B cell (primary cell): ENCODE measurements at regions of chr7 and their contacts with region 1.

Region 1: GRCh38 chr7:44999245-45000095 is 531 bp upstream of the CCM2 start:
- DNase-seq: peak; percentile 100
- ATAC-seq: peak; percentile 84
- H3K4me3 ChIP-seq: peak overlapping the region; percentile 40 to 99 (median 76)
- H3K4me3 Mint-ChIP-seq: peak overlapping the region; percentile 99
- H3K27ac ChIP-seq: peak overlapping the region; percentile 65 to 72
- H3K27ac Mint-ChIP-seq: peak overlapping the region; percentile 98
- H3K4me1 ChIP-seq: peaks cover 36 to 50% of the 10 kb centered on the region in 2 donors
- H3K4me1 Mint-ChIP-seq: peaks cover 57% of the 10 kb centered on the region
- H3K27me3 ChIP-seq: no peaks in the 10 kb centered on the region
- H3K27me3 Mint-ChIP-seq: no peaks in the 10 kb centered on the region
- CTCF ChIP-seq: no peak

Region 2: DNA sequence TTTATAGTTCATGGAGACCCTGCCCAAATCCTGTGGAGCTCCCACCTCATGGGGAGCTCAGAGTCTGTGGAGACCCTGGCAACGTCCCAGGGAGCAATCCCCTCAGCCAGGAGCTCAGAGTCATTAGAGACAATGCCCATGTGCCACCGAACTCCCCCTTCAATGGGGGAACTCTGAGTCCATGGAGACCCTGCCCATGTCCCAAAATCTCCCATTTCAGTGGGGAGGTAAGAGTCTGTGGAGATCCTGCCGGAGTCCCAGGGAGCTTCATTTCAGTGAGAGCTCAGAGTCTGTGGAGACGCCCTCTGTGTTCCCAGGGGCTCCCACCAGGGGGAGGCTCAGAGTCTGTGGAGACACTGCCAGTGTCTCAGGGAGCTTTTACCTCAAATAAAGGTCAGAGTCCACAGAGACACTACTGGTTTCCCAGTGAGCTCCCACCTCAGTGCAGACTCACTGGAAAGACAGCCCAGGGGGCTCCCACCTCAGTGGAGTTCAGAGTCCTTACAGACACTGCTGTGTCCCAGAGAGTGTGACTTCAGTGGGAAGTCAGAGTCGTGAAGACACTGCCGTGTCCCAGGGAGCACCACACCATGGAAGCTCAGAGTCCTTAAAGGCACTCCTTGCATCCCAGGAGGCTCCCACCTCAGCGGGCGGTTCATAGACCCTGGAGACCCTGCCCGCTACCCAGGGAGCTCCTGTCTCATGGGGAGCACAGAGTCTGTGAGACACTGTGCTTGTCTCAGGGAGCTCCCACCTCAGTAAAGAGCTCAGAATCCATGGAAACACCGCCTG is 25.7 kb before region 1 on chr7:
- CTCF ChIA-PET with region 1: interaction called, 49 read pairs
- POLR2A ChIA-PET with region 1: interaction called, 20 read pairs
- intact Hi-C with region 1: loop called (anchors 1 kb)
- DNase-seq: no peak
- ATAC-seq: no peak
- H3K4me3 ChIP-seq: no peak overlapping the region
- H3K4me3 Mint-ChIP-seq: no peak overlapping the region
- H3K27ac ChIP-seq: no peak overlapping the region
- H3K27ac Mint-ChIP-seq: peak overlapping the region; percentile 15
- H3K4me1 ChIP-seq: peaks cover 14 to 41% of the 10 kb centered on the region in 2 donors
- H3K4me1 Mint-ChIP-seq: peaks cover 38% of the 10 kb centered on the region
- H3K27me3 ChIP-seq: no peaks in the 10 kb centered on the region
- H3K27me3 Mint-ChIP-seq: no peaks in the 10 kb centered on the region
- CTCF ChIP-seq: peak; percentile 41

Region 3: DNA sequence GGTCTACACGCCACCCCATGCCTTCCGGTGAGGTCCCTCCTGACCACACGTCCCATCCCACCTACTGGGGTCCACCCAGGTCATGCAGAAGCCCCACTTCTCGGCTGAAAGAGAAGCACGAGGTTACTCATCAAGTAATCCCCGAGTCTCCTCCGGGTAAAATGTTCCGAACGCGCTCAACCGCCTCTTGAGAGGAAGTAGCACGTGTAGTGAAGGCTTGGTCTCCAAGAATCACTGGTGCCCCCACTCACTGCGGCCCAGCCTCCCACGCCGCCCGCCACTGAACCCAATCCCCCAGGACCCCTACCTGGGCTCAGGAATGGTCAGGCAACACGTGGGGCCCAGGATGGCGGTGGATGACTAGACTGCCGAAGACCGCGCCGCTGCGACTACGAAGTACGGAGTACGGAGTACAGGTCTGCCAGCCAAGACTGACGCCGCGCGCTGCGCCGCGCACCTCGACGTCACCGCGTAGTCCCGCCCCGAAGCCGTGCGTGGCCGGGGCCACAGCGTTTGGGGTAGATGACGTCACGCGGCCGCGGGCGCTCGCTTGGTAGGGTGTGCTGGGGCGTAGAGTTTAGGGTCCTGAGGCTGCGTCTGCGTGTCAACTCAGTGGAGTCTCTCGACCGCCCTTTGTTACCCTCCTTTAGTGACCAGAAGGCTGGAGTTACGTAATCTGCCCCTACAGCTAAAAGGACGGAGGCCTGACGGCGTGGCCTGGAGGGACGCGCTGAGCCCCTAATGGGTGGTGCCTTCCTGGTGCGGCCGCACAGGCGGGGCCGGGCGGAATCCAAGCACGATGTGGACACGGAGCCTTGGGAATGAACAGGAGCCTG is 13.0 kb before region 1 on chr7:
- CTCF ChIA-PET with region 1: interaction called, 4 read pairs
- POLR2A ChIA-PET with region 1: interaction called, 12 read pairs
- intact Hi-C with region 1: loop called (anchors 1 kb)
- DNase-seq: peak; percentile 98
- ATAC-seq: peak; percentile 94
- H3K4me3 ChIP-seq: peak overlapping the region; percentile 62 to 92 (median 73)
- H3K4me3 Mint-ChIP-seq: peak overlapping the region; percentile 98
- H3K27ac ChIP-seq: peak overlapping the region; percentile 97 to 98
- H3K27ac Mint-ChIP-seq: peak overlapping the region; percentile 98
- H3K4me1 ChIP-seq: peaks cover 29 to 39% of the 10 kb centered on the region in 2 donors
- H3K4me1 Mint-ChIP-seq: peaks cover 51% of the 10 kb centered on the region
- H3K27me3 ChIP-seq: no peaks in the 10 kb centered on the region
- H3K27me3 Mint-ChIP-seq: no peaks in the 10 kb centered on the region
- CTCF ChIP-seq: no peak

Region 4: GRCh38 chr7:45069444-45070253 is 70.2 kb after region 1 on chr7:
- CTCF ChIA-PET with region 1: interaction called, 4 read pairs
- POLR2A ChIA-PET with region 1: interaction called, 3 read pairs
- intact Hi-C with region 1: loop called (anchors 10 kb)
- DNase-seq: no peak
- ATAC-seq: no peak
- H3K4me3 ChIP-seq: no peak overlapping the region
- H3K4me3 Mint-ChIP-seq: no peak overlapping the region
- H3K27ac ChIP-seq: no peak overlapping the region
- H3K27ac Mint-ChIP-seq: no peak overlapping the region
- H3K4me1 ChIP-seq: peaks cover 5 to 10% of the 10 kb centered on the region in 2 donors
- H3K4me1 Mint-ChIP-seq: peaks cover 10% of the 10 kb centered on the region
- H3K27me3 ChIP-seq: no peaks in the 10 kb centered on the region
- H3K27me3 Mint-ChIP-seq: no peaks in the 10 kb centered on the region
- CTCF ChIP-seq: no peak